Activated naive CD4-positive, alpha-beta T cell treated with anti-CD3 and anti-CD28 coated beads for 36 hours (primary cell): ENCODE measurements at regions of chrX and their contacts with region 1.

Region 1: DNA sequence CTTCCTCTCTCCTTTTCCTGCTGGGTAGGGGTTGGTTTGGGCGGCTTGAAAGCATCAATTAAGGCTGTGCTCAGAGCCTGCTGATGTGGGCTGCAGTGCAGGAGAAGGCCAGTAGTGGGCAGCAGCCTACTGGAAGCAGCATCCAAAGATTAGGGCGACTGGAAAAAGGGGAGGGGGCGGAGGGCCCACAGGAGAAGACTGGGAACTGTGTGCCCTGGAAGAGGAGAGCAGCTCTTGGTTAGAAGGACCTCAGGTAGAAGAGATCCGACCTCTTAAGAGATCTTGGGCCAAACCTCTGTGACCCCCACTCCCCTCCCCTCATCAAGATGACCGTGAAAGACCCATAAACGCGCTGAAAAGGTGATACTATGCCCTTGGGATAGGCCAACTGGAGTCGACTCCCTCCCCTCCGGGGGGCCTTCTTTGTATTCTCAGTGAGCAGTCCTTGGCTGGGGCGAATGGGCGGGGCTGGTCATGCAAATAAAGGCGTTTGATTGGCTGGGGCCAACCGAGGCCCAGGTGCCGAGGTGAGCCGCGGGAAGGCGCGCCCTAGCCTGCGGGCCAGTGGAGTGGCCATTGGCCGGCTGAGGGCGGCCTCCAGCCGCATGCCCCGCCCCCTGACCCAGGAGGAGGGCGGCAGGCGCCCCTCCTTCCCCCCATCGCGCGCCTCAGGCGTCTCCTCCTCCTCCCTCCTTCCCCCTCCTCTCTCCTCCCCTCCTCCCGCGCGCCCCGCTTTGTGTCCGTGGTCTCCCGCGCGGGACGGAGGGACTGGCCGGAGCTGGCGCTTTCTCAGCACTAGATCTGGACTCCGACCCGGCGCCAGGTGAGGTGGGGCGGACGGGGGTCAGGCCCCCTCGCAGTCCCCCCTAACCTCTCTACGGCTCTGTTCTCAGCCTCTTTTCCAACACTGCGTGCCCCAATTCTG is 10.1 kb downstream of the DLG3 start:
- DNase-seq: peak; percentile 77
- H3K4me3 Mint-ChIP-seq: peak overlapping the region; percentile 76
- H3K27ac Mint-ChIP-seq: no peak overlapping the region
- H3K4me1 Mint-ChIP-seq: peaks cover 28% of the 10 kb centered on the region
- H3K27me3 Mint-ChIP-seq: no peaks in the 10 kb centered on the region

Region 2: GRCh38 chrX:70231666-70232065 is 223.0 kb before region 1 on chrX:
- CTCF ChIA-PET with region 1: no interaction called
- intact Hi-C with region 1: no loop called
- DNase-seq: no peak
- H3K4me3 Mint-ChIP-seq: no peak overlapping the region
- H3K27ac Mint-ChIP-seq: no peak overlapping the region
- H3K4me1 Mint-ChIP-seq: peaks cover 5% of the 10 kb centered on the region
- H3K27me3 Mint-ChIP-seq: no peaks in the 10 kb centered on the region

Region 3: GRCh38 chrX:70433848-70434351 is 20.8 kb before region 1 on chrX:
- CTCF ChIA-PET with region 1: interaction called, 9 read pairs
- intact Hi-C with region 1: loop called (anchors 1 kb)
- DNase-seq: peak; percentile 80
- H3K4me3 Mint-ChIP-seq: peak overlapping the region; percentile 84
- H3K27ac Mint-ChIP-seq: peak overlapping the region; percentile 50
- H3K4me1 Mint-ChIP-seq: peaks cover 7% of the 10 kb centered on the region
- H3K27me3 Mint-ChIP-seq: peaks cover 11% of the 10 kb centered on the region

Region 4: DNA sequence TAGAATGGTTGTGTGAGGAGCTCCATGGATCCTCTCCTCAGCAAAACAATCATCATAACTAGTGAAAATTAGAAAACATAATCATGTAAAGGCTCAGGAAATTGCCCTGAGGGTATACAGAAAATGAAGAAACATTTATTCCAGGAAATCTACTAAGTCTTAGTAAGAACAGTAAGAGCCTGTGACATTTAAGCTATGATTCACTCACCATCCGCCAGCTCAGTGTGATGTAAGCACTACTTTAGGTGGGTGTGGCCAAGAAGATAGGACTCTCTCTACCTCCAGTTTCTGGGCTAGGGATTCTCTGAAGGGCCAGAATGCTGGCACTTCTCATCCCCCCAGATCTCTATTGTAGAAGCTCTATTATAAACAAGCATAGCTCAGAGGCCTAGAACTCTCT is 137.4 kb after region 1 on chrX:
- CTCF ChIA-PET with region 1: no interaction called
- intact Hi-C with region 1: loop called (anchors 1 kb)
- DNase-seq: peak; percentile 63
- H3K4me3 Mint-ChIP-seq: no peak overlapping the region
- H3K27ac Mint-ChIP-seq: peak overlapping the region; percentile 36
- H3K4me1 Mint-ChIP-seq: peaks cover 12% of the 10 kb centered on the region
- H3K27me3 Mint-ChIP-seq: no peaks in the 10 kb centered on the region

Region 5: GRCh38 chrX:70755850-70756249 is 301.1 kb after region 1 on chrX:
- CTCF ChIA-PET with region 1: no interaction called
- intact Hi-C with region 1: loop called (anchors 10 kb)
- DNase-seq: peak; percentile 78
- H3K4me3 Mint-ChIP-seq: no peak overlapping the region
- H3K27ac Mint-ChIP-seq: no peak overlapping the region
- H3K4me1 Mint-ChIP-seq: peaks cover 12% of the 10 kb centered on the region
- H3K27me3 Mint-ChIP-seq: no peaks in the 10 kb centered on the region

Region 6: DNA sequence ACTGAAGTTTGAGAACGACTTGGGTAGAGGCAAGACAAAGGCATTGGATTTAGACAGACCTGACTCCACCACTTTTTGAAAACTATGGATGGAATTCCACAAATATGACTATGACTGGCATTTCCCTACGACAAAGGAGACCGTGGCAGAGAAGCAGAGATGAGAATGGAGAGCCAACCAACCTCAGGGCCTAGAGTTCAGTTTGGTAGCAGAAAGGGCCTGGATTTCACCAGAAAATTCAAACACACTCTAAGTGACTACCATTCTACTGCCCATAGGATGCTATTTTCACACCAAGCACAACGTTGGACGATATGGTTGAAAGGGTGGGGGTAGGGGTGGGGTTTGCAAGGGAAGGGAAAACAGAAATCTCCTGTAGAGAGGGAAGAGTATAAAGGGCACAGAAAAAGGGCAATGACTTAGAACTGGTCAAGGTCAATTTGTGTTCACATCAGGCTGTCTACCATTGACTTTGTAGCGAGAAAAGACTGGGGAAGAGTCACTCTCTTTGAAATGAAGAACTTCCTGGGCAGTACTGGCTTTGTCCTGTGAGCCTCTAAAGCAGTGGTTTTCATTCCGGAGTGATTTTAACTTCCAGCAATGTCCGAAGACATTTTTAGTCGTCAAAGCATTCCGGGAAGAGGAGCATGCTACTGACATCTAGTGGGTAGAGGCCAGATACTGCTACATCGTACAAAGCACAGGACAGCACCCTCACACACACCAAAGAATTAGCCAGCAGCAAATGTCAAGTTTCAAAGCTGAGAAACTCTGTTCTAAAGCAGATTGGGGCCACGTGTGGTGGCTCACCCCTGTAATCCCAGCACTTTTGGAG is 524.4 kb after region 1 on chrX:
- CTCF ChIA-PET with region 1: no interaction called
- intact Hi-C with region 1: loop called (anchors 5 kb)
- DNase-seq: peak; percentile 10
- H3K4me3 Mint-ChIP-seq: no peak overlapping the region
- H3K27ac Mint-ChIP-seq: no peak overlapping the region
- H3K4me1 Mint-ChIP-seq: no peaks in the 10 kb centered on the region
- H3K27me3 Mint-ChIP-seq: no peaks in the 10 kb centered on the region